A549 (cell line): ENCODE measurements at regions of chr2 and their contacts with region 1.

Region 1: GRCh38 chr2:70671092-70671675 is 96.8 kb downstream of the ADD2 start:
- DNase-seq: no peak
- ATAC-seq: peak in 1 of 2 experiments; percentile 52; a peak in 3 of 6 replicates
- H3K4me3 ChIP-seq: no peak overlapping the region
- H3K27ac ChIP-seq: no peak overlapping the region
- H3K4me1 ChIP-seq: 0 out of 3 replicates have a peak, but pooled peaks cover 5% of the 10 kb centered on the region
- CTCF ChIP-seq: no peak
- EP300 ChIP-seq: no peak
- POLR2A ChIP-seq: no peak
- RAD21 ChIP-seq: no peak

Region 2: DNA sequence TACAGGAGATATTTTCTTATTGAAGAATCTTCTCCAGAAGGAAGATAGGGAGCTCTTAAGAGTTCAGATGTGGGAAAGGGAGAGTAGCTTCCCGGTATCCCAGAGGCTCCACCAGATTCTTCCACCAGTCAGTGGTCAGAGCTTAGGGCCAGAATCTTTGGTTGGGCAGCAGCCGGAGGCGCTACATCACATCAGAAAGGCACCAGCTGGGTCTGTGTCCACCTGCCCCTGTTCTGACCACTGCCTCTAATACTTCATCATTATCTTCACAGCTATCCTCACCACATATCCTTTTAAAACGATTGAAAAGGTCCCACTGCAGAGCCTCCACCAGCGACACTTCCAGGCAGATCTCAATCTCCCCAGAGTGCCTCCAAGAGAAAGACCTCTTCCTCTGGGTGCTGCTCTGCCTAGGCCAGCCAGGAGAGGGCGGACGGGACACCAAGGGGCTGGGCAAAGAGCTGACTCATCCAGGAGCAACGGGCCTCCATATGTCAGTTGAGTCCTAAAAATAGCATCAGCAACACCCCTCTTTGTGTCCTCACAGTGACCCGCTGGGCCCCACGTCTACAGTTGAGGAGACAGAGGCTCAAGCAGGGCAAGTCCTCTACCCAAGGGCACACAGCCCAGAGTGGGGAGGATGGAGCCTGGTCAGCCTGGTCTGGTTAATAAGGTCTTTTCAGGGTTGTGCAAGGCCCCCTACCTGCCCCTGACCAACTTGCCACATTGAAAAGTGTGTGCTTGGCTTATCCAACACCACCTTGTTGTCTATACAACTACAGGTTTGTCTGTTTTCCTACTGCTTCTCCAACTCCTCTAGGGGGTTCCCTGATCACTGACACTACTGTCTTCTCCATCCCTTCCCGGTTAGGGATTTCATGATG is 15.6 kb after region 1 on chr2:
- CTCF ChIA-PET with region 1: interaction called, 20 read pairs
- POLR2A ChIA-PET with region 1: no interaction called
- DNase-seq: peak; percentile 86 to 93
- ATAC-seq: peak; percentile 97 to 100
- H3K4me3 ChIP-seq: no peak overlapping the region
- H3K27ac ChIP-seq: peak overlapping the region; percentile 59 to 80; a peak in 5 of 6 replicates
- H3K4me1 ChIP-seq: peaks cover 7% of the 10 kb centered on the region
- CTCF ChIP-seq: peak; percentile 58
- EP300 ChIP-seq: no peak
- POLR2A ChIP-seq: no peak
- RAD21 ChIP-seq: peak; percentile 39 to 51; a peak in 3 of 5 replicates